CD4-positive, alpha-beta memory T cell (primary cell): ENCODE measurements at regions of chr12 and their contacts with region 1.

Region 1: GRCh38 chr12:65169320-65170208 is at the start of gene LEMD3:
- DNase-seq: peak; percentile 94 to 96 (median 95)
- H3K4me3 ChIP-seq: peak within 1 kb of the TSS; percentile 71 to 89
- H3K4me3 Mint-ChIP-seq: peak within 1 kb of the TSS; percentile 98 to 100 (median 100)
- H3K27ac ChIP-seq: peak within 1 kb of the TSS; percentile 95
- H3K27ac Mint-ChIP-seq: peak within 1 kb of the TSS; percentile 97 to 100 (median 99)
- H3K4me1 ChIP-seq: peaks cover 47% of the 10 kb centered on the region
- H3K4me1 Mint-ChIP-seq: peaks cover 20 to 33% (median 27%) of the 10 kb centered on the region in 4 donors
- H3K27me3 ChIP-seq: no peaks in the 10 kb centered on the region
- H3K27me3 Mint-ChIP-seq: no peaks in the 10 kb centered on the region
- total RNA-seq, gene LEMD3: 50.0 to 52.6 TPM

Region 2: DNA sequence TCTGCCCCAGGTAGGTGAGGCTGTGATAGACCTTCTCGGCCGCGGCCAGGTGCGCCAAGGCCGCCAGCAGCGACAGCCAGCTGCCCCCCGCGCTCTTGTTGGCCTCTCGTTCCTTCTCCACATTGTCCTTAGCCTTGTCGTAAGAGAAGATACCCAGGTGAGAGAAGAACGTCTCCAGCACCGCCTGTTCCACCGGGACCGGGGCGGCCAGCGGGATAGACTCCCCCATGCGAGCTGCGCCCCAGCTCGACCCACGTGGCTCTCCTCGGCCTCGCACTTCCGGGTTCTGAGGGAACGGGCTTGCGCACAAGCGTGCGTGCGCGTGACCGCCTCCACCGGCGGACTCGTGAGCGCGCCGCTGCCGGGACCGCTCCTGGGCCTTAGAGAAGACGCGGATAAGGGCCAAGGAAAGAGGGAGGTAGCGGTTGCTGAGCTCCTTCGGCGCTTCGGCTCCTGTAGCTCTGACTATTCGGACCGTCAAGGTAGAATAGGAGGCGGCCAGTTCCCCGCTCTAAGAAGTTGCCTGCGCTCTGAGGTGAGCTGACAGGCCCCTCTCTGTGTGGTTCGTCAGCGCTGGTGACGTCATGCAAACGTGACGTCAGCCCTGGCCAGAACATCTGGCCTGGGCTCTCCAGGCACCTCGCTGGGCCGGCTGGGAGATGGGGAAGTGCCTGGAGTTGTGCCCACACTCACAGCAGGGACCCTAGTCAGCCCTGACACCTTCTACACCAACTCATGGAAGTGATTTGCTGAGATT is 947.4 kb before region 1 on chr12 and contains the start of gene KICS2:
- CTCF ChIA-PET with region 1: no interaction called
- POLR2A ChIA-PET with region 1: no interaction called
- intact Hi-C with region 1: loop called (anchors 1 kb)
- DNase-seq: peak; percentile 91 to 94 (median 94)
- H3K4me3 ChIP-seq: peak within 1 kb of the TSS; percentile 69 to 71
- H3K4me3 Mint-ChIP-seq: peak within 1 kb of the TSS; percentile 94 to 99 (median 97)
- H3K27ac ChIP-seq: peak within 1 kb of the TSS; percentile 89
- H3K27ac Mint-ChIP-seq: peak within 1 kb of the TSS; percentile 92 to 100 (median 99)
- H3K4me1 ChIP-seq: peaks cover 37% of the 10 kb centered on the region
- H3K4me1 Mint-ChIP-seq: peaks cover 21 to 49% (median 34%) of the 10 kb centered on the region in 4 donors
- H3K27me3 ChIP-seq: no peaks in the 10 kb centered on the region
- H3K27me3 Mint-ChIP-seq: peaks cover 0 to 7% of the 10 kb centered on the region in 2 donors
- total RNA-seq, gene KICS2: 21.2 to 24.1 TPM

Region 3: DNA sequence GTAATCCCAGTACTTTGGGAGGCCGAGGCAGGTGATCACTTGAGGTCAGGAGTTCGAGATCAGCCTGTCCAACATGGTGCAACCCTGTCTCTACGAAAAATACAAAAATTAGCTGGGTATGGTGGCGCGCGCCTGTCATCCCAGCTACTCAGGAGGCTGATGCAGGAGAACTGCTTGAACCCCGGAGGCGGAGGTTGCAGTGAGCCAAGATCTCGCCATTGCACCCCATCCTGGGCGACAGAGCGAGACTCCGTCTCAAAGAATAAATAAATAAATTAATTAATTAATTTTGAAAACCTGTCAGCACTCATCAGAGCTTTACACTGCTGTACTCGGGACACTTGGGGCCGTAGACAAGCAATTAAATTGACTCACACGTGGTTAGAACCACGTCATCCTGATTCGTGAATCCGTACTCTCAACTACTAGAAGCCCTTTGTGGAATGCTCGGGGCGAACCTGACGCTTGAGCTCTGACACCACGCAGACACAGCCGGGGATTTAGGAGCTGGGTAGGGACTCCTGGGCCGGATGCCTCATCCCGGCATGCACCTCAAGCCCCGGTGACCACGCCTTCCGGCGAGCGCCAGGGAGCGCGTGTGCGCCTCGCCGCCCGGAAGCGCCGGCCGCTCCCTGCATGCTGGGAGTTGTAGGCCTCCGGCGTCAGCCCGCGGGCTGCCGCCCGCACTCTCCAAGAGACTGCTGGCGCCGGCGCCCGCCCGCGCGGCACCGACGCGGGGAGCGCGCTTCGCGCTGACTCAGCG is 765.7 kb before region 1 on chr12 and contains the start of gene XPOT:
- CTCF ChIA-PET with region 1: no interaction called
- POLR2A ChIA-PET with region 1: interaction called, 4 read pairs
- intact Hi-C with region 1: loop called (anchors 10 kb)
- DNase-seq: peak; percentile 91 to 95 (median 94)
- H3K4me3 ChIP-seq: peak within 1 kb of the TSS; percentile 78 to 86
- H3K4me3 Mint-ChIP-seq: peak within 1 kb of the TSS; percentile 90 to 98 (median 96)
- H3K27ac ChIP-seq: peak within 1 kb of the TSS; percentile 91
- H3K27ac Mint-ChIP-seq: peak within 1 kb of the TSS; percentile 94 to 98 (median 97)
- H3K4me1 ChIP-seq: peaks cover 33% of the 10 kb centered on the region
- H3K4me1 Mint-ChIP-seq: peaks cover 21 to 49% (median 37%) of the 10 kb centered on the region in 4 donors
- H3K27me3 ChIP-seq: no peaks in the 10 kb centered on the region
- H3K27me3 Mint-ChIP-seq: no peaks in the 10 kb centered on the region
- total RNA-seq, gene XPOT: 88.8 TPM

Region 4: DNA sequence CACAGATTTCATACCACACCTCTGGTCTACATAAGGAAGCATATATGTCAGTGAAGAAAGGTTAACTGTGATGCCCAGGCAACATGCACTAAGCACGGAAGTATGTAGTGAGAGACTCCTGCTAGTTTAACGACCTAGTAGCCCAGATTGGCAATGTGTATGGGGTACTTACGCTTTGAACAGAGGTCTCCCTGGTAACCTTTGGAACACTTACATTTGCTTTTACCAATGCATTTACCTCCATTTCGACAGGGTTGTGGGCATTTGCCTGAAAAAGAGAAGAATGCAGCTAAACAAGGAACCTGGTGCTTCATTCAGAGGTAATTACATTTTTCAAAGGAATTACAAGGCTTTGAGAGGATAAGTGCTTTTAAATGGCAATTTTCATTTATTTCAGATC is 113.7 kb before region 1 on chr12:
- CTCF ChIA-PET with region 1: no interaction called
- POLR2A ChIA-PET with region 1: no interaction called
- intact Hi-C with region 1: no loop called
- DNase-seq: no peak
- H3K4me3 ChIP-seq: no peak overlapping the region
- H3K4me3 Mint-ChIP-seq: no peak overlapping the region
- H3K27ac ChIP-seq: no peak overlapping the region
- H3K27ac Mint-ChIP-seq: no peak overlapping the region
- H3K4me1 ChIP-seq: no peaks in the 10 kb centered on the region
- H3K4me1 Mint-ChIP-seq: no peaks in the 10 kb centered on the region
- H3K27me3 ChIP-seq: no peaks in the 10 kb centered on the region
- H3K27me3 Mint-ChIP-seq: peaks cover 5 to 16% of the 10 kb centered on the region in 2 donors

Region 5: GRCh38 chr12:65156366-65156841 is 13.2 kb before region 1 on chr12:
- CTCF ChIA-PET with region 1: interaction called, 16 read pairs
- POLR2A ChIA-PET with region 1: interaction called, 19 read pairs
- intact Hi-C with region 1: loop called (anchors 1 kb)
- DNase-seq: peak in 2 of 5 donors; percentile 33 to 36
- H3K4me3 ChIP-seq: no peak overlapping the region
- H3K4me3 Mint-ChIP-seq: peak overlapping the region in 7 of 8 donors; percentile 3 to 45 (median 40)
- H3K27ac ChIP-seq: peak overlapping the region; percentile 4
- H3K27ac Mint-ChIP-seq: peak overlapping the region; percentile 12 to 69 (median 48)
- H3K4me1 ChIP-seq: peaks cover 13% of the 10 kb centered on the region
- H3K4me1 Mint-ChIP-seq: peaks cover 6 to 18% (median 8%) of the 10 kb centered on the region in 4 donors
- H3K27me3 ChIP-seq: no peaks in the 10 kb centered on the region
- H3K27me3 Mint-ChIP-seq: peaks cover 13 to 15% of the 10 kb centered on the region in 2 donors

Region 6: DNA sequence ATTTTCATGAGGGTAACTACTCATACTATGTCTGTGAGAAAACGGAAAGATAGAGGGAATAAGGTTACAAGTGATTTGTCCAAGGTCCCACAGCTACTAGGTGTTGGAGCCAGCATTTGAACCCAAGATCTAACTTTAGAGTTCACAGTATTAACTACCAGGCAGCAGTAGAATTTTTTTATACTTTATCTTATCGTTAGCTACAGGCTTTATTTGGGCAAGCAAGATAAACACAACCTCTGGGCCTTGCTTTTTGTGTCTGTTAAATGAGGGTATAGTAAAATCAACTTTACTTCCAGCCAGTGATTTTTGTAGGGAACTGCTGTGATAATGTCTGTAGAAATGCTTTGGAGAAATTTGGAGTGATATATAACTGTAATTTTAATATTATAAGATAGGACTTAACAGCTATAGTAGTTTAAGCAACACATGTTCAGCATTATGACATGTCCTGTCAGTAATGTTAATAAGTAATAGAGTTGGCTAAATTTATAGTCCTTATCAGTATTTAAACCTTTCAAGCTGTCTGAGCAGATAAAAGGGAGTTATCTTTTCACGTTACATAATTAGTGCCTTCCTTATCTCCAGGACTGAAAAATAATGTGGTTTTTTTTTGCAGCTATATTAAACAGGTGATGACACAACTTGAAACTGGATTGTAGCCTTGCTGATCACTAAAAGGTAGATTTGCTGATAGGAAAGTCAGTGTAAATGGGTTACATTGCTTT is 12.6 kb after region 1 on chr12:
- CTCF ChIA-PET with region 1: interaction called, 4 read pairs
- POLR2A ChIA-PET with region 1: interaction called, 8 read pairs
- intact Hi-C with region 1: loop called (anchors 1 kb)
- DNase-seq: no peak
- H3K4me3 ChIP-seq: no peak overlapping the region
- H3K4me3 Mint-ChIP-seq: peak overlapping the region in 2 of 8 donors; percentile 9 to 17
- H3K27ac ChIP-seq: no peak overlapping the region
- H3K27ac Mint-ChIP-seq: no peak overlapping the region
- H3K4me1 ChIP-seq: peaks cover 55% of the 10 kb centered on the region
- H3K4me1 Mint-ChIP-seq: peaks cover 37 to 48% (median 43%) of the 10 kb centered on the region in 4 donors
- H3K27me3 ChIP-seq: no peaks in the 10 kb centered on the region
- H3K27me3 Mint-ChIP-seq: no peaks in the 10 kb centered on the region

Region 7: DNA sequence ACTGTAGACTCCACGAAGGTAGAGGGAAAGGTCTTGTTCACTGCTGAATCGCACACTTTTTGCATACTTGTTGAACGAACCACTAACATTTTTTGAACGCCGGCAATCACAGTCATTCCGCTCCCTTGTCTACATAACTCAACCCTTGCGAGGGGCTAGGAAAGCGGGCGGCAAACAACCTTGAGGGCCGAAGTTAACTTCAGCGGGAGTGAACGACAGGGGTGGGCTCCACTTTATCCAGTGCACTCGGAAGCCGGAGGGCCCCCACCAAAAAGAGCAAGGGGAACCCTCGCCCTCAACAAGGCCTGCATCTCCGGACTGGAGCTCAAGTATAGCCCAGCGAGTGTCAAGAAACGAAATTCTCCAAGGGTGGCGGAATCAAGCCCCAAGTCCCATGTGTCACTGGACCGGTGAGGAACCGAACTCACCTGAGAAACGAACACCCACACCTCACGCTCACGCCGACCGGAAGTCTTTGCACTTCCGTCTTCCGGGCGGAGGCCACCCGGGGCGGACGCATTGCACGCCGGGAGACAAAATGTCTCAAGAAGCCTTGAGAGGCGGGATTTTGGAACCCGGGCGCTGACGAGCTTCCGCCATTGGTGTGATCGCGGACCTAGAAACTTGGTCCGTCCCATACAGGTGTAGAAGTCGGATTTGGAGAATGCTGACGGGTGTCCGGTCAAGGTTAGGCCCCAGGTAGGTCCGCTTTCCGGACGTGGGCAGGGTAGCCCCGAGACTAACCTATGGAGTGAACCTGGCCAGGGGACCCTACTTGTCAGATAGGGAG is 960.9 kb after region 1 on chr12 and contains the start of gene LLPH:
- CTCF ChIA-PET with region 1: no interaction called
- POLR2A ChIA-PET with region 1: interaction called, 12 read pairs
- intact Hi-C with region 1: loop called (anchors 10 kb)
- DNase-seq: peak; percentile 84 to 93 (median 86)
- H3K4me3 ChIP-seq: peak within 1 kb of the TSS; percentile 72 to 86
- H3K4me3 Mint-ChIP-seq: peak within 1 kb of the TSS; percentile 92 to 99 (median 96)
- H3K27ac ChIP-seq: peak within 1 kb of the TSS; percentile 83
- H3K27ac Mint-ChIP-seq: peak within 1 kb of the TSS; percentile 93 to 99 (median 98)
- H3K4me1 ChIP-seq: peaks cover 37% of the 10 kb centered on the region
- H3K4me1 Mint-ChIP-seq: peaks cover 40 to 61% (median 45%) of the 10 kb centered on the region in 4 donors
- H3K27me3 ChIP-seq: no peaks in the 10 kb centered on the region
- H3K27me3 Mint-ChIP-seq: no peaks in the 10 kb centered on the region
- total RNA-seq, gene LLPH: 25.8 to 26.4 TPM

Region 8: GRCh38 chr12:66169221-66170170 is 999.9 kb after region 1 on chr12 and contains the start of gene TMBIM4:
- CTCF ChIA-PET with region 1: interaction called, 3 read pairs
- POLR2A ChIA-PET with region 1: interaction called, 10 read pairs
- intact Hi-C with region 1: loop called (anchors 1 kb)
- DNase-seq: peak; percentile 86 to 94 (median 87)
- H3K4me3 ChIP-seq: peak within 1 kb of the TSS; percentile 85 to 92
- H3K4me3 Mint-ChIP-seq: peak within 1 kb of the TSS; percentile 91 to 98 (median 96)
- H3K27ac ChIP-seq: peak within 1 kb of the TSS; percentile 98
- H3K27ac Mint-ChIP-seq: peak within 1 kb of the TSS; percentile 95 to 99 (median 98)
- H3K4me1 ChIP-seq: peaks cover 43% of the 10 kb centered on the region
- H3K4me1 Mint-ChIP-seq: peaks cover 33 to 61% (median 48%) of the 10 kb centered on the region in 4 donors
- H3K27me3 ChIP-seq: no peaks in the 10 kb centered on the region
- H3K27me3 Mint-ChIP-seq: peaks cover 2 to 3% of the 10 kb centered on the region in 2 donors
- total RNA-seq, gene TMBIM4: 98.5 to 108 TPM